Caco-2 (cell line): ENCODE measurements at regions of chr17 and their contacts with region 1.

Region 1: GRCh38 chr17:75430159-75430974 is 24.9 kb upstream of the GRB2 start:
- DNase-seq: peak; percentile 92 to 97
- H3K4me3 ChIP-seq: 0 out of 2 replicates have a peak overlapping the region, but pooled peaks have one; percentile 5
- H3K4me3 Mint-ChIP-seq: peak overlapping the region; percentile 67
- H3K27ac Mint-ChIP-seq: peak overlapping the region; percentile 94
- H3K4me1 ChIP-seq: peaks cover 40% of the 10 kb centered on the region
- H3K4me1 Mint-ChIP-seq: peaks cover 29% of the 10 kb centered on the region
- H3K27me3 ChIP-seq: no peaks in the 10 kb centered on the region
- H3K27me3 Mint-ChIP-seq: no peaks in the 10 kb centered on the region
- CTCF ChIP-seq: peak in 1 of 2 experiments; percentile 15

Region 2: GRCh38 chr17:75442168-75443103 is 12.1 kb after region 1 on chr17:
- CTCF ChIA-PET with region 1: interaction called, 4 read pairs
- POLR2A ChIA-PET with region 1: interaction called, 18 read pairs
- intact Hi-C with region 1: loop called (anchors 1 kb)
- DNase-seq: peak; percentile 51 to 54
- H3K4me3 ChIP-seq: no peak overlapping the region
- H3K4me3 Mint-ChIP-seq: no peak overlapping the region
- H3K27ac Mint-ChIP-seq: peak overlapping the region; percentile 71
- H3K4me1 ChIP-seq: peaks cover 18% of the 10 kb centered on the region
- H3K4me1 Mint-ChIP-seq: peaks cover 7% of the 10 kb centered on the region
- H3K27me3 ChIP-seq: no peaks in the 10 kb centered on the region
- H3K27me3 Mint-ChIP-seq: no peaks in the 10 kb centered on the region
- CTCF ChIP-seq: no peak

Region 3: DNA sequence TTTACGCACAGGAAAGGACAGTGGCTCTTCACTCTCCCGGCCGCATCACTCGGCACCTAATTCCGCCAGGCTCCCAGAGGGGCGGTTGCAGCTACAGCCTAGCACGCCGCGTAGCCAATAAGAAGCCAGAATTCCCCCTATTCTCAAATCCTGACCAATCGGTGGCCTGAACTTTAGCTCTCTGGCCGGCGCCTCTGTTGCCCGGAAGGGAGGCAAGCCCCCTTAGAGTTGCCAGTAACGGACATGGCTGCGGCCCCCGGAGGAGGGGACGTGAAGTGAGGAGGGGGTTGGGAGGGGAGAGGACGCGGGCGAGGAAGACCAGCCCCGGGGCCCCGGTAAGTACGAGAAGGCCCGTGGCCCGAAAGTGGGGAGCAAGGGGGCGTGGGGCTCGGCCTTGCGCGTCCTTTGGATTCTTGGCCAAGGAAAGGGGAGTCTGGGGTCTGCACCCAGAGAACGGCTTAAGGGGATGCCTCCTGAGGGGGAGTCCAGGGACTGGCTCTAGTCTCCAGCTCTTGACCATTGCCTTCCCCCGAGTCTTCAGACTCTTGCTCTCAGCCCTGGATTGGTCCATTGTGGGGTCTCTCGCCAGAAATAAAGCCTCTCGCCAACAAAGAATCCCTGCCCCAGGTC is 26.2 kb after region 1 on chr17 and contains the start of gene TMEM94:
- CTCF ChIA-PET with region 1: interaction called, 12 read pairs
- POLR2A ChIA-PET with region 1: interaction called, 31 read pairs
- intact Hi-C with region 1: loop called (anchors 1 kb)
- DNase-seq: peak; percentile 96 to 97
- H3K4me3 ChIP-seq: peak within 1 kb of the TSS; percentile 46
- H3K4me3 Mint-ChIP-seq: peak within 1 kb of the TSS; percentile 92
- H3K27ac Mint-ChIP-seq: peak within 1 kb of the TSS; percentile 94
- H3K4me1 ChIP-seq: peaks cover 45% of the 10 kb centered on the region
- H3K4me1 Mint-ChIP-seq: peaks cover 30% of the 10 kb centered on the region
- H3K27me3 ChIP-seq: no peaks in the 10 kb centered on the region
- H3K27me3 Mint-ChIP-seq: no peaks in the 10 kb centered on the region
- CTCF ChIP-seq: no peak
- total RNA-seq, gene TMEM94: 109 and 115 TPM in 2 replicates

Region 4: DNA sequence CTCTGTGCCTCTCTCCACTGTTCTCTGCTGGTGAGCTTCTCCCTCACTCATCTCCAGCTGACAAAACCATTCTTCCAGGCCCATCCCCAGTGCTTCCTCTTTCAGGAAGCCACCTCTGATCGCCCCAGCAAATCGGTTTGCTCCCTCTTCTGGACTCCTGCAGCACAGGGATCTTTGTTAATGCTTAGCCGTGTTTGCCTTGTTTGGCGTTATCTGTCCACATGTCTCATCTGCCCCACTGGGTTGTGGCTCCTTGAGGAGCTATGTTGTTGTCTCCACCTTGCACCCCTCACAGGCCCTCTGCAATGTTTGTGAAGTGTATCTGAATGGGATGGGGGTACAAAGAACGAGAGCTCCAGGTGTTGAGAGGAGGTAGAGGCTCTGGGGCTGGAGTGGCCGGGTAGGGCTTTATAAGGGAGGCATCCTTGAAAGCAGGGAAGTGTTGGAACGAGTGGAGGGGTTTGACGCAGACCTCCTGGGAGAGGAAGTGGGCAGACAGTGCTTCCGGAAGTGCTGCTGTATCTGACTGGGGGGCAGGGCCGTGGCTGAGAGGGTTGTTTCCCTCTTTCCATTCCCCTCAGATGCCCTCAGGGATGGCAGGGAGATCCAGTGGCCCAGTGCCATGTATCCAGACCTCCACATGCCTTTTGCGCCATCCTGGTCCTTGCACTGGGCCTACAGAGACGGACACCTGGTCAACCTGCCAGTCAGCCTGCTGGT is 57.1 kb after region 1 on chr17:
- CTCF ChIA-PET with region 1: interaction called, 4 read pairs
- POLR2A ChIA-PET with region 1: interaction called, 3 read pairs
- intact Hi-C with region 1: loop called (anchors 1 kb)
- DNase-seq: peak in 1 of 2 experiments; percentile 46
- H3K4me3 ChIP-seq: no peak overlapping the region
- H3K4me3 Mint-ChIP-seq: no peak overlapping the region
- H3K27ac Mint-ChIP-seq: peak overlapping the region; percentile 12
- H3K4me1 ChIP-seq: no peaks in the 10 kb centered on the region
- H3K4me1 Mint-ChIP-seq: peaks cover 7% of the 10 kb centered on the region
- H3K27me3 ChIP-seq: no peaks in the 10 kb centered on the region
- H3K27me3 Mint-ChIP-seq: no peaks in the 10 kb centered on the region
- CTCF ChIP-seq: peak in 1 of 2 experiments; percentile 42

Region 5: DNA sequence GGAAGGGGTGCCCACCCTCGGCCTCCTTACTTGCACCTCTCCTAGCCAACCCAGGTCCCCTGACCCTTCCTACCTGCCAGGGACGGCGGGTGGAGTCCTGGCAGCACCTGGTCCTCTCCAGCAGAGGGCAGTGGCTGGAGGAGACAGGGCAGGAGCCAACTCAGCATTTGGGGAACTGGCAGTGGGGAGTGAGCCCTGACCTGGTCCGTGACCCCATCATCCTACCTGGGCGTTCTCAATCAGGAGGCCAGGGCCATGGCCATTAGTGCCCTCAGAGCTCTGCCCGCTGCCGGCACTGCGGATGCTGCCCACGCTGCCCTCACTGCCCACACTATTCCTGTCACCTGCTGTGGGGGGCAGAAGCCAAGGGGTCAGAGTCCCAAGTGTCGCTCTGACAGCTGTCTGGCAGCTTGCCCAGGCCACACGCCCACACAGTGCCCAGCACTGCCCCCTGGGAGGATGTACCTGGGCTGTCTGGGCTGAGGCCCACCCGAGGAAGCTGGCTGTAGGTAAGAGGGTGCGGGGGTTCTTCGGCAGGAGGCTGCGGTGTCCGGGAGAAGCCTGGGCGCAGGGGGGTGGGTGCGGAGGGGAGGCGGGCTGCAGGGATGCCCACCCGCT is 74.1 kb after region 1 on chr17:
- CTCF ChIA-PET with region 1: no interaction called
- POLR2A ChIA-PET with region 1: interaction called, 9 read pairs
- intact Hi-C with region 1: loop called (anchors 1 kb)
- DNase-seq: peak; percentile 66 to 70
- H3K4me3 ChIP-seq: no peak overlapping the region
- H3K4me3 Mint-ChIP-seq: no peak overlapping the region
- H3K27ac Mint-ChIP-seq: peak overlapping the region; percentile 15
- H3K4me1 ChIP-seq: peaks cover 4% of the 10 kb centered on the region; the same call in 1 of the 2 replicates
- H3K4me1 Mint-ChIP-seq: peaks cover 9% of the 10 kb centered on the region
- H3K27me3 ChIP-seq: no peaks in the 10 kb centered on the region
- H3K27me3 Mint-ChIP-seq: no peaks in the 10 kb centered on the region
- CTCF ChIP-seq: peak; percentile 73 to 89

Region 6: GRCh38 chr17:75515496-75516254 is 85.3 kb after region 1 on chr17 and contains the start of gene CASKIN2:
- CTCF ChIA-PET with region 1: interaction called, 6 read pairs
- POLR2A ChIA-PET with region 1: interaction called, 9 read pairs
- intact Hi-C with region 1: loop called (anchors 1 kb)
- DNase-seq: peak; percentile 97 to 99
- H3K4me3 ChIP-seq: peak within 1 kb of the TSS; percentile 93
- H3K4me3 Mint-ChIP-seq: peak within 1 kb of the TSS; percentile 94
- H3K27ac Mint-ChIP-seq: no peak within 1 kb of the TSS
- H3K4me1 ChIP-seq: peaks cover 15% of the 10 kb centered on the region; the same call in 1 of the 2 replicates
- H3K4me1 Mint-ChIP-seq: peaks cover 12% of the 10 kb centered on the region
- H3K27me3 ChIP-seq: no peaks in the 10 kb centered on the region
- H3K27me3 Mint-ChIP-seq: no peaks in the 10 kb centered on the region
- CTCF ChIP-seq: peak; percentile 99
- total RNA-seq, gene CASKIN2: 41.8 and 48.9 TPM in 2 replicates

Region 7: DNA sequence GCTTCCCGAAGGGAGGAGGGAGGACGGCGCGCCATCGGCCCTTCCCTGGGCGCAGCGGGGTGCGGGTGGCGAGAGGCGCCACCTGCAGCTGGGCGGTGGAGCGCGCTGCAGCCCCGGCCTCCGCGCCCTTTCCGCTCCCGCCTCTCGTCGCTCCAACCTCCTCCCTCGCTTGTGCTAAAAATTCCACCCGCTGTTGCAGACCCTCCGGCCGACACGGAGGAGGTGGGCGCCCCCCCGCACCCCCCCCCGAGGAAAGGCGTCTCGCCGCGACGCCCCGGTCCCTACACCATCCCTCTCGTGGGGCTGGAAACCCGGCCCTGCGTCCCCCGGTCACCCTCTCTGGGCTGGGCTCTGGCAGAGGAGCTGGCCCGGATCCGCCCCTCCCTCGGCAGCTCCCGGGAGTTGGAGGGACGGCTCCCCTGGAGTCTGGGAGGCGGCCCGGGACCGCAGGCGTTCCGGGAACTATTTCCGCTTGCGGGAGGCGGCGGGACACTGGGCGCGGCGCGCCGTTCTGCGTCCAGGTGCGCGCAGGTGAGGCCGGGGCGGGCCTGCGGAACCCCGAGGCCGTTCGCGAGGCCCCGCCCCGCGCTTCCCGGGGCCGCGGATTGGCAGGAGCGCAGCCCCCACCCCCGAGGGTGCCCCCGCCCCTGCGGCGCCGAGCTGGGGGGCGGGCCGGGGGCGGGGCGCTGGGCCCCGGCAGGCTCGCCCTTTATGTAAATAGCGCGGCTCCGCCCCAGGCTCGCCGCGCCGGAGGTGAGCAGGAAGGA is 94.8 kb after region 1 on chr17 and contains the start of gene LLGL2:
- CTCF ChIA-PET with region 1: interaction called, 4 read pairs
- POLR2A ChIA-PET with region 1: interaction called, 3 read pairs
- intact Hi-C with region 1: loop called (anchors 2 kb)
- DNase-seq: peak; percentile 95 to 98
- H3K4me3 ChIP-seq: peak within 1 kb of the TSS; percentile 68
- H3K4me3 Mint-ChIP-seq: peak within 1 kb of the TSS; percentile 92
- H3K27ac Mint-ChIP-seq: peak within 1 kb of the TSS; percentile 76
- H3K4me1 ChIP-seq: peaks cover 5% of the 10 kb centered on the region; the same call in 1 of the 2 replicates
- H3K4me1 Mint-ChIP-seq: peaks cover 16% of the 10 kb centered on the region
- H3K27me3 ChIP-seq: no peaks in the 10 kb centered on the region
- H3K27me3 Mint-ChIP-seq: no peaks in the 10 kb centered on the region
- CTCF ChIP-seq: peak; percentile 47 to 54
- total RNA-seq, gene LLGL2: 165 and 179 TPM in 2 replicates